Common myeloid progenitor, CD34-positive (primary cell): ENCODE measurements at regions of chr11 and their contacts with region 1.

Region 1: GRCh38 chr11:116513894-116514293 is 258.9 kb downstream of the BUD13 start:
- DNase-seq: peak; percentile 36 to 60 (median 59)
- H3K4me3 ChIP-seq: no peak overlapping the region
- H3K27ac ChIP-seq: no peak overlapping the region
- H3K4me1 ChIP-seq: no peaks in the 10 kb centered on the region
- H3K27me3 ChIP-seq: peaks cover 0 to 8% (median 3%) of the 10 kb centered on the region in 5 experiments

Region 2: GRCh38 chr11:116641561-116642045 is 127.7 kb after region 1 on chr11:
- CTCF ChIA-PET with region 1: interaction called, 14 read pairs
- POLR2A ChIA-PET with region 1: no interaction called
- DNase-seq: peak; percentile 14 to 37 (median 34)
- H3K4me3 ChIP-seq: no peak overlapping the region
- H3K27ac ChIP-seq: no peak overlapping the region
- H3K4me1 ChIP-seq: no peaks in the 10 kb centered on the region
- H3K27me3 ChIP-seq: peaks cover 0 to 5% (median 0%) of the 10 kb centered on the region in 5 experiments